ENCODE measurements at regions of chr17 and their contacts with region 1.

Region 1: DNA sequence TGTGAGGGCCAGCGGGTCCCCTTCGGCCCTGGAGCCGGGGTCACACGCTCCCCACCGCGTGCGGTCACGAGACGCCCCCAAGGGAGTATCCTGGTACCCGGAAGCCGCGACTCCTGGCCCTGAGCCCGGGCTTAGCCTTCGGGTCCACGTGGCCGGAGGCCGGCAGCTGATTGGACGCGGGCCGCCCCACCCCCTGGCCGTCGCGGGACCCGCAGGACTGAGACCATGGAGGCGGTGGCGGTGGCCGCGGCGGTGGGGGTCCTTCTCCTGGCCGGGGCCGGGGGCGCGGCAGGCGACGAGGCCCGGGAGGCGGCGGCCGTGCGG is at the start of gene NAGLU:
- DNase-seq: peak; percentile 100
- H3K4me3 ChIP-seq: peak within 1 kb of the TSS; percentile 70 to 82
- H3K27ac ChIP-seq: peak within 1 kb of the TSS; percentile 58 to 86
- H3K4me1 ChIP-seq: peaks cover 4 to 19% of the 10 kb centered on the region in 2 experiments; a peak in 3 of 4 replicates
- H3K27me3 ChIP-seq: no peaks in the 10 kb centered on the region
- CTCF ChIP-seq: no peak
- EP300 ChIP-seq: 0 out of 4 replicates have a peak, but pooled peaks of 1 of the 2 experiments have one; percentile 10
- RAD21 ChIP-seq: no peak
- polyA plus RNA-seq, gene NAGLU: 25.0 and 33.9 TPM in 2 replicates

Region 2: GRCh38 chr17:42554250-42555121 is 18.5 kb after region 1 on chr17:
- CTCF ChIA-PET with region 1: interaction called, 4 read pairs
- POLR2A ChIA-PET with region 1: interaction called, 17 read pairs
- DNase-seq: peak; percentile 96
- H3K4me3 ChIP-seq: peak overlapping the region; percentile 79 to 89
- H3K27ac ChIP-seq: peak overlapping the region; percentile 69 to 74
- H3K4me1 ChIP-seq: peaks cover 2 to 20% of the 10 kb centered on the region in 2 experiments; a peak in 1 of 4 replicates
- H3K27me3 ChIP-seq: no peaks in the 10 kb centered on the region
- CTCF ChIP-seq: no peak
- EP300 ChIP-seq: no peak
- RAD21 ChIP-seq: no peak

Measured in SK-N-SH (cell line).